B cell (primary cell): ENCODE measurements at regions of chr1 and their contacts with region 1.

Region 1: GRCh38 chr1:66436378-66437145 is 97.4 kb upstream of the SGIP1 start:
- DNase-seq: peak; percentile 52
- ATAC-seq: peak; percentile 65
- H3K4me3 ChIP-seq: no peak overlapping the region
- H3K4me3 Mint-ChIP-seq: no peak overlapping the region
- H3K27ac ChIP-seq: no peak overlapping the region
- H3K27ac Mint-ChIP-seq: peak overlapping the region; percentile 32
- H3K4me1 ChIP-seq: peaks cover 20 to 21% of the 10 kb centered on the region in 2 donors
- H3K4me1 Mint-ChIP-seq: peaks cover 34% of the 10 kb centered on the region
- H3K27me3 ChIP-seq: no peaks in the 10 kb centered on the region
- H3K27me3 Mint-ChIP-seq: no peaks in the 10 kb centered on the region
- CTCF ChIP-seq: peak; percentile 16

Region 2: DNA sequence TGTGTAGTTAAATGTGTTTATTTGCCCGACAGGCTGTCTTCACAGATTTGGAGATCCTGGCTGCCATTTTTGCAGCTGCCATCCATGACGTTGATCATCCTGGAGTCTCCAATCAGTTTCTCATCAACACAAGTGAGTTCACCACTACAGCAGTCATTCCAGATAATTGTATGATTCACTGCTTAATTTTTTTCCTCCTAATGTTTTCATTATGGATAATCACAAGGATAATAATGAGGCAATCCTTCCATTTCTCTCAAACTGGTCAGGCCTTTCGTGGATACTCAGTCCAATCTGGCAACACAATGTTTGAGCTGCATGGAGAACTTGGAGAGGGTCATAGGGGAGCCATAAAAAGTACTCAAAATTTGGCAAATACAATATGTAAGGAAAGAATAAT is 70.9 kb before region 1 on chr1:
- CTCF ChIA-PET with region 1: interaction called, 12 read pairs
- POLR2A ChIA-PET with region 1: no interaction called
- intact Hi-C with region 1: no loop called
- DNase-seq: no peak
- ATAC-seq: no peak
- H3K4me3 ChIP-seq: no peak overlapping the region
- H3K4me3 Mint-ChIP-seq: no peak overlapping the region
- H3K27ac ChIP-seq: peak overlapping the region in 1 of 2 donors; percentile 81
- H3K27ac Mint-ChIP-seq: peak overlapping the region; percentile 57
- H3K4me1 ChIP-seq: peaks cover 33 to 34% of the 10 kb centered on the region in 2 donors
- H3K4me1 Mint-ChIP-seq: peaks cover 80% of the 10 kb centered on the region
- H3K27me3 ChIP-seq: no peaks in the 10 kb centered on the region
- H3K27me3 Mint-ChIP-seq: no peaks in the 10 kb centered on the region
- CTCF ChIP-seq: no peak

Region 3: GRCh38 chr1:66380452-66381212 is 55.9 kb before region 1 on chr1:
- CTCF ChIA-PET with region 1: interaction called, 38 read pairs
- POLR2A ChIA-PET with region 1: no interaction called
- intact Hi-C with region 1: no loop called
- DNase-seq: peak; percentile 91
- ATAC-seq: peak; percentile 99
- H3K4me3 ChIP-seq: peak overlapping the region in 2 of 5 experiments; percentile 13 to 39
- H3K4me3 Mint-ChIP-seq: peak overlapping the region; percentile 74
- H3K27ac ChIP-seq: peak overlapping the region; percentile 67 to 83
- H3K27ac Mint-ChIP-seq: peak overlapping the region; percentile 85
- H3K4me1 ChIP-seq: peaks cover 67 to 68% of the 10 kb centered on the region in 2 donors
- H3K4me1 Mint-ChIP-seq: peaks cover 75% of the 10 kb centered on the region
- H3K27me3 ChIP-seq: no peaks in the 10 kb centered on the region
- H3K27me3 Mint-ChIP-seq: no peaks in the 10 kb centered on the region
- CTCF ChIP-seq: no peak

Region 4: GRCh38 chr1:66402194-66402593 is 34.4 kb before region 1 on chr1:
- CTCF ChIA-PET with region 1: interaction called, 25 read pairs
- POLR2A ChIA-PET with region 1: no interaction called
- intact Hi-C with region 1: loop called (anchors 2 kb)
- DNase-seq: peak; percentile 92
- ATAC-seq: peak; percentile 87
- H3K4me3 ChIP-seq: no peak overlapping the region
- H3K4me3 Mint-ChIP-seq: peak overlapping the region; percentile 77
- H3K27ac ChIP-seq: peak overlapping the region; percentile 37 to 76
- H3K27ac Mint-ChIP-seq: peak overlapping the region; percentile 88
- H3K4me1 ChIP-seq: peaks cover 42 to 45% of the 10 kb centered on the region in 2 donors
- H3K4me1 Mint-ChIP-seq: peaks cover 67% of the 10 kb centered on the region
- H3K27me3 ChIP-seq: no peaks in the 10 kb centered on the region
- H3K27me3 Mint-ChIP-seq: no peaks in the 10 kb centered on the region
- CTCF ChIP-seq: no peak

Region 5: DNA sequence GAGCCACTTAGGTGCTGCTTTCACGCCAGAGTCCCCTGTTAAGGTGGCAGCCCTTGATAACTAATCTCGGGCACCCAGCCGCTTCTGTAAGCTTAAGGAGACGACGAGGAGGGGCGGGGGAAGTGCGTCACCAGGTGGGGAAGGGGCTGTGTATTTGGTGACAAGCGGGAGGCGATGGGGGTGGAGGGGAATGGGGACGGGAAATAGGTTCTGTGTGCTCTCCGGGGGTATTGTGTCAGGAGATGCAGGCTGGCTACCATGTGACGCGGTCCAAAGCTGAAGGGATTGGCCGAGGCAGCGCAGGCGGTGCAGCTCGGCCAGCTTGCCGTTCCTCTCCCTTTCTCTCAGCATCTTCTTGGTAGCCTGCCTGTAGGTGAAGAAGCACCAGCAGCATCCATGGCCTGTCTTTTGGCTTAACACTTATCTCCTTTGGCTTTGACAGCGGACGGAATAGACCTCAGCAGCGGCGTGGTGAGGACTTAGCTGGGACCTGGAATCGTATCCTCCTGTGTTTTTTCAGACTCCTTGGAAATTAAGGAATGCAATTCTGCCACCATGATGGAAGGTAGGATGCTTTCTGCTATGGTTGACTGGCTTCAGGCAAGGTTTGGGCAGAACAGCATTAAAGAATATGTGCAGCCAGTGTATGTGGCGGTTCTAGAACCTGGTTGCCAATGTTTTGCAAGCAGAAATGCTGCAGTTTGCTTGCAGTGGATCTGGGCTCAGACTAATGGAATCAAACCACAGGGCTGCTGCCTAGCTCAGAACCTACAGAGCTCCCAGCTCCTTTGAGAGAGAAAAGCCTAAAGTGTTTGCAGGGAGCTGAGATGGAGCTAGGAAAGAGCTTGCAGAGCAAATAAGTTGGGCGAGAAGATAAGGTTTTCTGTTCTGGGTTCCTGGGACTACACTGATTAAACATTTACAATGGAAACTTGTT is 97.5 kb after region 1 on chr1 and contains the start of gene SGIP1:
- CTCF ChIA-PET with region 1: no interaction called
- POLR2A ChIA-PET with region 1: no interaction called
- intact Hi-C with region 1: no loop called
- DNase-seq: peak; percentile 13
- ATAC-seq: no peak
- H3K4me3 ChIP-seq: peak within 1 kb of the TSS in 4 of 5 experiments; percentile 27 to 64 (median 38)
- H3K4me3 Mint-ChIP-seq: peak within 1 kb of the TSS; percentile 84
- H3K27ac ChIP-seq: no peak within 1 kb of the TSS
- H3K27ac Mint-ChIP-seq: no peak within 1 kb of the TSS
- H3K4me1 ChIP-seq: peaks cover 14 to 15% of the 10 kb centered on the region in 2 donors
- H3K4me1 Mint-ChIP-seq: peaks cover 22% of the 10 kb centered on the region
- H3K27me3 ChIP-seq: peaks cover 0 to 20% (median 12%) of the 10 kb centered on the region in 4 experiments
- H3K27me3 Mint-ChIP-seq: peaks cover 47% of the 10 kb centered on the region
- CTCF ChIP-seq: no peak
- total RNA-seq, gene SGIP1: not detected in 2 replicates

Region 6: DNA sequence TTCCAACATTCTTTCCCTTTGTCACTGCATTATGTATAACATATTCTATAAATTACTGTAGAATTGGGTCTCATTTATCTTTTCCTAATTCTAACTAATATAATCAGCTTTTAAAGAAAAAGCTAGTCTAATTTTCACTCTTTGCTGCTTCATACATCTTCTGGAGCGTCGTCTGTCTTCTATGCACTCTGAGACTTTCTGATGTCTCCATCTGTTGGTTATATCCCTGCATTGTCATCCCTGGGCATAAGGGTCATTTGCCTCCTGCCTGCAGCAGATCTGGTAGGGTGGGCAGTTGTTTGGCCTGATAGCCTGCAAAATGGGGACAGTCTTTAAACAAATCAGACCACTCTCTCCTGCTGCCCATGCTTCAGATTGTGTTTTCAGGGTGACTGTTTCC is 274.9 kb after region 1 on chr1:
- CTCF ChIA-PET with region 1: no interaction called
- POLR2A ChIA-PET with region 1: no interaction called
- intact Hi-C with region 1: no loop called
- DNase-seq: no peak
- ATAC-seq: no peak
- H3K4me3 ChIP-seq: no peak overlapping the region
- H3K4me3 Mint-ChIP-seq: no peak overlapping the region
- H3K27ac ChIP-seq: no peak overlapping the region
- H3K27ac Mint-ChIP-seq: no peak overlapping the region
- H3K4me1 ChIP-seq: no peaks in the 10 kb centered on the region
- H3K4me1 Mint-ChIP-seq: no peaks in the 10 kb centered on the region
- H3K27me3 ChIP-seq: no peaks in the 10 kb centered on the region
- H3K27me3 Mint-ChIP-seq: peaks cover 8% of the 10 kb centered on the region
- CTCF ChIP-seq: no peak